ENCODE measurements at regions of chr12 and their contacts with region 1.

Region 1: DNA sequence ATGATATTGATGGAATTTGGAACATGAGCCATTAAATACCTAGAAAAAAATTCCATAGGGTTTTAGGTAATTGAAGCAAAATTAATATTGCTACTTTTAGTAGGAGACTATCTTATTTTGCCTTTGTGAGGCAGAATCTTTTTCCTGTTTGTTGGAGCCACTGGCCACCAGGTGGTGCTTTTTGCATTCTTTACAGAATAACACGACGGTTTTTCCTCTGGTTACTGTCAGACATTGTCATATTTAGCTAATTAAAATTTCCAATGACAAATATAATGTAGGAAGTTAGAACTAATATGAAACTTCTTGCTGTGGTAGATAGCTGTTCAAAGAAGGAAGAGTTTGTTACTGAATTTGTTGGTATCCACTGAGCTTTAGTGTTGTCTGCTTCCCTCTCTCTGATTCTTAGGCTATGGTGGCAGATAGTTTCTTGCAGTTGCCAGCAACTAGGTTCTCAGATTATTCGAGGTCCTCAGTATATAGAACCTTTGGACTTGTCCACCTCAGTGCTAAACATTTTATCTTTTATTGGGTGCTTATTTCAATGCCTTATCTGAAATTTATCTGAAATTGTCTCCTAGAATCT is 25.7 kb downstream of the RAB21 start:
- ATAC-seq: peak in 3 of 8 experiments; percentile 51 to 60 (median 52)
- H3K4me3 ChIP-seq: no peak overlapping the region
- H3K27ac ChIP-seq: no peak overlapping the region
- H3K4me1 ChIP-seq: no peaks in the 10 kb centered on the region

Region 2: GRCh38 chr12:71900091-71900490 is 119.8 kb after region 1 on chr12:
- in situ Hi-C with region 1: loop called in 1 of 9 experiments (anchors 25 kb)
- ATAC-seq: no peak
- H3K4me3 ChIP-seq: no peak overlapping the region
- H3K27ac ChIP-seq: no peak overlapping the region
- H3K4me1 ChIP-seq: no peaks in the 10 kb centered on the region

Region 3: DNA sequence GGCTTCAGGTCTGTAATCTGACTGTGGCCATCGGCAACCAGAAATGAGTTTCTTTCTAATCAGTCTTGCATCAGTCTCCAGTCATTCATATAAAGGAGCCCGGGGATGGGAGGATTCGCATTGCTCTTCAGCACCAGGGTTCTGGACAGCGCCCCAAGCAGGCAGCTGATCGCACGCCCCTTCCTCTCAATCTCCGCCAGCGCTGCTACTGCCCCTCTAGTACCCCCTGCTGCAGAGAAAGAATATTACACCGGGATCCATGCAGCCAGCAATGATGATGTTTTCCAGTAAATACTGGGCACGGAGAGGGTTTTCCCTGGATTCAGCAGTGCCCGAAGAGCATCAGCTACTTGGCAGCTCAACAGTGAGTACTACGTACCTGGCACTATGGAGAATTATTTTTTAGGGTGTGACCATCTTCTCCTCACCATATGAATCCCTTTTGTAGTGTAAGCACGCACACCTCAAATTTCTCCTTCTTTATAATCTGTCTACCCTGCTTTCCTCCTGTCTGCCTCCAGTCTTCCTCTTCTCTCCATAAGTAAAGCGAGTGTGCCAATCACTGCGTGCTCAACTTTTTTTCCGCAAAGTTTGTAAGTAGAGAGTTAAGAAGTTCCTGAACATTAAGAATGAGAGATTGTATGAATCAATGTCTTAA is 158.5 kb after region 1 on chr12 and contains the start of gene TPH2:
- in situ Hi-C with region 1: loop called in 1 of 9 experiments (anchors 25 kb)
- ATAC-seq: peak; percentile 72 to 99 (median 96)
- H3K4me3 ChIP-seq: peak within 1 kb of the TSS in 2 of 5 donors; percentile 7 to 16
- H3K27ac ChIP-seq: no peak within 1 kb of the TSS
- H3K4me1 ChIP-seq: peaks cover 0 to 11% of the 10 kb centered on the region in 2 donors
- total RNA-seq, gene TPH2: 0.22 to 30.3 (median 0.46) TPM in 7 of 8 experiments, not detected in the other

Region 4: DNA sequence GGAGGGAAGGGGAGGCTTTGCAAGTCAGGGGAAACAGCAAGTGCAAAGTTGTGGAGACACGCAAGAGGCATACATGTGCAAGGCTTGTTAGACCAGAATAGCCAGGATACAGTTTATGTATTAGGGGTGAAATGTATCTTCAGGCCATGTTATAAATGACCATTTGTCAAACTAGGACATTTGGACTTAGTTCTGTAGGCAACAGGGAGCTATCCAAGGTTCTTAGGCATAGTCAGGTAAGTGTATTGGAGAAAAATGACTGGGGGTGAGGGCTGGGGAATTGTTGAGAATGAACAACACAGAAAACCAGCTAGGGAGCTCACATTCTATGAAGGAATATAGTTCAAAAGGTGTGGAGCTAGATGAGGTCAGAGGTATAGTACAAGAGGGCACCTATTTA is 200.8 kb after region 1 on chr12:
- in situ Hi-C with region 1: no loop called
- ATAC-seq: no peak
- H3K4me3 ChIP-seq: no peak overlapping the region
- H3K27ac ChIP-seq: no peak overlapping the region
- H3K4me1 ChIP-seq: peaks cover 0 to 6% of the 10 kb centered on the region in 2 donors